ENCODE measurements at regions of chr11 and their contacts with region 1.

Region 1: DNA sequence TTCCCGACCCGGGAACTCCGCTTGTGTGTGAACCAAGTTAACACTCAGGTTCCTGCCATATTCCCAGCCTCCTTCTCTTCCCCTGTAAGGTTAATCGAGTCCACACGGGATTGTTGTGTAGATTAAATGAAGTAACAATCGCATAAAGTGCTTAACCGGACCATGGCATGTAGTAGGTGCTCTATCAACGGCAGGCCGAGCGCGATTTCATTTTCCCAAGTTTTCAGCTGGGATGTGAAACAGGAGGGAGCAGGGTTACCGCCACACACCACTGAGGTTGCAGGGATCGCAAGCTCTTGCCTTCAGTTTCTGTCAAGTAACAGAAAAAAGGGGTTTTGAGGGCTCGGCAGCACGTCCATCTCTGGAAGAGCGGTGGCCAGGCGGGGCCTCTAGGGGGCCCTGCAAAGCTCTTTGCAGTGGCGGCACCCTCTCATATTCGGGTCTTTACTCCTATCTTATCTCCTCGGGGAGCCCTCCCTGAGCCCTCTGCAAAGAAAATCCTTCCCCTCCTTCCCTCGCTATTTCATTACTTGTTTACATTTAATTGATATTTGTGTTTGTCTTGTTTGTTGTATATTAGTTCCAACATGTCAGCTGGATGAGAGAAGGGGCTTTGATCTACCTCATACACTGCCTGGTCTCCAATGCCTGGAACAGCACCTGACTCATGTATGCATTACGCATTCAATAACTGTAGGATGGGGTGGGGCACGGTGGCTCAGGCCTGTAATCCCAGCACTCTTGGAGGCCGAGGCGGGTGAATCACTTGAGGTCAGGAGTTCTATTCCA is 818 bp upstream of the PLEKHA7 start:
- DNase-seq: peak; percentile 62 to 65
- H3K4me3 ChIP-seq: peak overlapping the region; percentile 56
- H3K4me3 Mint-ChIP-seq: no peak overlapping the region
- H3K27ac Mint-ChIP-seq: peak overlapping the region; percentile 66
- H3K4me1 ChIP-seq: peaks cover 23% of the 10 kb centered on the region
- H3K4me1 Mint-ChIP-seq: peaks cover 8% of the 10 kb centered on the region
- H3K27me3 ChIP-seq: no peaks in the 10 kb centered on the region
- H3K27me3 Mint-ChIP-seq: no peaks in the 10 kb centered on the region
- CTCF ChIP-seq: peak; percentile 73 to 86

Region 2: DNA sequence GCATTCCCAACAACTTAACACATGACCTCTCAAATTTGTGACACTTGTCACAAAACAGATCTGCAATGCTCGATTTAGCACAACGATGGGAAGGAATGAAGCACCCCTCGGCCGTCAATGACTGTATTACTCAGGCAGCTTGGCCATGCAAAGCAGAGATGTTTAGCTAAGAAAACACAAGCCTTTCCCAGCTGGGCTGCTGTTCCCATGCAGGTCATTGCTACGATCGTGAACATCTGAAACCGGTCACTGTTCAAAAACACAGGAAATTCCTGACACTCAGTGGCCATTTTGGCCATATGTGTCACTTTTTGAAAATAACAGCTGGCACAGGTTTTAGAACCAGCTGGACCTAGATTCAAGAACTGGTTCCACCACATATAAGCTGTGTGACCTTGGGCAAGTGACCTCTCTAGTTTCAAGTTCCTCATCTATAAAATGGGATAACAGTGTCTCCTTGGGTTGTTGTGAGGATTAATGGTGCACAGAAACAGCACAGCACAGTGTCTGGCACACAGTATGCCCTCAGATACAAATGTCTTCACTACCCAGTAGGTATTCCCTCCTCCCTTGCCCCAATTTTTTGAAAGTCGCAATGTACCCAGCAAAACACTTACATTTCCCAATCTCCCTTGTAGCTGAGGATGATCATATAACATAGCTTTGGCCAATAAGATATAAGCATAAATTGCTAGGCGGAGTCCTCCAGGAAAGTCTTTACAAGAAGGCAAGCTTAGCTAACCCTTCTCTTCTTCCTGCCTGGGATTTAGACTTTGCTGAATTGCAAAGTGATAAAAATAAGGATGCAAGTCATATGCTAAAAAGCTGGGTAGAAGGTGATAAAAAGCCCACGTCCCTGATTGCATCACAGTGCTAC is 183.5 kb before region 1 on chr11:
- CTCF ChIA-PET with region 1: no interaction called
- POLR2A ChIA-PET with region 1: no interaction called
- intact Hi-C with region 1: no loop called
- DNase-seq: no peak
- H3K4me3 ChIP-seq: no peak overlapping the region
- H3K4me3 Mint-ChIP-seq: no peak overlapping the region
- H3K27ac Mint-ChIP-seq: peak overlapping the region; percentile 12
- H3K4me1 ChIP-seq: no peaks in the 10 kb centered on the region; the same call in 1 of the 2 replicates
- H3K4me1 Mint-ChIP-seq: no peaks in the 10 kb centered on the region
- H3K27me3 ChIP-seq: no peaks in the 10 kb centered on the region
- H3K27me3 Mint-ChIP-seq: no peaks in the 10 kb centered on the region
- CTCF ChIP-seq: no peak

Region 3: GRCh38 chr11:16891964-16892363 is 123.1 kb before region 1 on chr11:
- CTCF ChIA-PET with region 1: no interaction called
- POLR2A ChIA-PET with region 1: no interaction called
- intact Hi-C with region 1: no loop called
- DNase-seq: no peak
- H3K4me3 ChIP-seq: no peak overlapping the region
- H3K4me3 Mint-ChIP-seq: no peak overlapping the region
- H3K27ac Mint-ChIP-seq: peak overlapping the region; percentile 70
- H3K4me1 ChIP-seq: peaks cover 56% of the 10 kb centered on the region
- H3K4me1 Mint-ChIP-seq: peaks cover 57% of the 10 kb centered on the region
- H3K27me3 ChIP-seq: no peaks in the 10 kb centered on the region; the same call in 1 of the 2 replicates
- H3K27me3 Mint-ChIP-seq: no peaks in the 10 kb centered on the region
- CTCF ChIP-seq: no peak

Region 4: GRCh38 chr11:16945671-16946469 is 69.2 kb before region 1 on chr11:
- CTCF ChIA-PET with region 1: interaction called, 13 read pairs
- POLR2A ChIA-PET with region 1: interaction called, 4 read pairs
- intact Hi-C with region 1: loop called (anchors 1 kb)
- DNase-seq: peak; percentile 75 to 83
- H3K4me3 ChIP-seq: no peak overlapping the region
- H3K4me3 Mint-ChIP-seq: no peak overlapping the region
- H3K27ac Mint-ChIP-seq: peak overlapping the region; percentile 3
- H3K4me1 ChIP-seq: peaks cover 9% of the 10 kb centered on the region; the same call in 1 of the 2 replicates
- H3K4me1 Mint-ChIP-seq: peaks cover 16% of the 10 kb centered on the region
- H3K27me3 ChIP-seq: no peaks in the 10 kb centered on the region
- H3K27me3 Mint-ChIP-seq: no peaks in the 10 kb centered on the region
- CTCF ChIP-seq: peak; percentile 87 to 97

Region 5: GRCh38 chr11:16956538-16957153 is 58.4 kb before region 1 on chr11:
- CTCF ChIA-PET with region 1: no interaction called
- POLR2A ChIA-PET with region 1: no interaction called
- intact Hi-C with region 1: loop called (anchors 2 kb)
- DNase-seq: peak; percentile 68 to 70
- H3K4me3 ChIP-seq: no peak overlapping the region
- H3K4me3 Mint-ChIP-seq: peak overlapping the region; percentile 61
- H3K27ac Mint-ChIP-seq: peak overlapping the region; percentile 76
- H3K4me1 ChIP-seq: peaks cover 68% of the 10 kb centered on the region
- H3K4me1 Mint-ChIP-seq: peaks cover 48% of the 10 kb centered on the region
- H3K27me3 ChIP-seq: no peaks in the 10 kb centered on the region
- H3K27me3 Mint-ChIP-seq: no peaks in the 10 kb centered on the region
- CTCF ChIP-seq: no peak

Region 6: DNA sequence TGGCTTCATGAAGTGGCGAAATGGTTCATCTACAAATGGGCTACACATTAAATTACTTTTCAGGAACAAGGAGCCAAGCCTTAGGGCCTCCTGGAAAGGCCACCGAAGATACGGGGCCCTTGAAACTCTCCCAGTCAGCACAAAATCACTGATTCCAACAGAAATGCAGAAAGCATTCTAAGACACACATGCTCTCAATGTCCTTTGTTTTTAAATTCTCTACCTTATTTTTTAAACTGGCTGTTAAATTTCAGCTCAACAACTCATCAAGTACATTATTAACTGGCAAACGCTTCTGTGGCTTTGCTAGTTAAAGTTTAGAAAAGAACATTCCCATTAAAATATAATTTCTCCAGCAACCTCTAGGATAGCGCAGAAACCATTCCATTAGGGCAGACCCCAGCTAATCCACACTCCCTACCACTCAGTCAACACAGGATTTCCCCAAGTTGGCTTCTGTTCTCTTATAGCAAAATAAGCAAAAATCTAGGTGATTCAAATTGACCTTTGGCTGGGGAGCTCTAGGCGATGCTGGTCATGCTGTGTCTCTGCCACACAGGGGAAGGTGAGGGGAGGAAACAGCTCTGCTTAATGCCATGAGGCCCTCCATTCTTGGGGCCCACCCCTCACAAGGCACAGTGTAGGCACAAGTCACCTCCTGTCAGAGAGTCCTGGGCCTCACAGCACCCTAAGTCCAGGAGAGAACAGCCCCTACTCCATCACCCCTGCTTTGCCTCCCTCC is 47.9 kb before region 1 on chr11:
- CTCF ChIA-PET with region 1: no interaction called
- POLR2A ChIA-PET with region 1: no interaction called
- intact Hi-C with region 1: loop called (anchors 1 kb)
- DNase-seq: no peak
- H3K4me3 ChIP-seq: no peak overlapping the region
- H3K4me3 Mint-ChIP-seq: no peak overlapping the region
- H3K27ac Mint-ChIP-seq: peak overlapping the region; percentile 36
- H3K4me1 ChIP-seq: peaks cover 21% of the 10 kb centered on the region
- H3K4me1 Mint-ChIP-seq: peaks cover 32% of the 10 kb centered on the region
- H3K27me3 ChIP-seq: no peaks in the 10 kb centered on the region
- H3K27me3 Mint-ChIP-seq: no peaks in the 10 kb centered on the region
- CTCF ChIP-seq: no peak

Region 7: GRCh38 chr11:16981651-16982194 is 33.3 kb before region 1 on chr11:
- CTCF ChIA-PET with region 1: no interaction called
- POLR2A ChIA-PET with region 1: no interaction called
- intact Hi-C with region 1: no loop called
- DNase-seq: no peak
- H3K4me3 ChIP-seq: no peak overlapping the region
- H3K4me3 Mint-ChIP-seq: no peak overlapping the region
- H3K27ac Mint-ChIP-seq: no peak overlapping the region
- H3K4me1 ChIP-seq: peaks cover 9% of the 10 kb centered on the region
- H3K4me1 Mint-ChIP-seq: peaks cover 24% of the 10 kb centered on the region
- H3K27me3 ChIP-seq: no peaks in the 10 kb centered on the region
- H3K27me3 Mint-ChIP-seq: no peaks in the 10 kb centered on the region
- CTCF ChIP-seq: no peak

Region 8: DNA sequence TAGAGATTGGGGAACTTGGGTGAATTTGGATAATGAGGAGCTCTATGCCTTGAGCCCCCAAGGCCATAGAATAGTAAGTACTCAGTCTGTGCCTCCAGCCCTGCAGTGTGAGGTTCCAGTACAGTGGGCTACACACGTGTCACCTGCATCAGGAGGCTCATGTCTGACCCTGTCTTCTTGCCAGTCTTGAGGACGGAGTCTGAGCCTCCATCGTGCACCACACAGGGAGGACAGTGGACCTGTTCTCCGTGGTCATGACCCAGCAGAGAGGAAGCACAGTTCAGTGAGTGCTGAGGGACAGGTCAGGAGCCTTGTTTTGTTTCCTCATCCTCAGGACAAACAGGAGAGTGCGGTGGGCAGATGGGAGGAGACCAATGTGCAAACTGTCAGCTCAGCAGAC is 31.7 kb after region 1 on chr11:
- CTCF ChIA-PET with region 1: interaction called, 4 read pairs
- POLR2A ChIA-PET with region 1: no interaction called
- intact Hi-C with region 1: loop called (anchors 1 kb)
- DNase-seq: no peak
- H3K4me3 ChIP-seq: no peak overlapping the region
- H3K4me3 Mint-ChIP-seq: no peak overlapping the region
- H3K27ac Mint-ChIP-seq: peak overlapping the region; percentile 59
- H3K4me1 ChIP-seq: peaks cover 35% of the 10 kb centered on the region
- H3K4me1 Mint-ChIP-seq: peaks cover 30% of the 10 kb centered on the region
- H3K27me3 ChIP-seq: no peaks in the 10 kb centered on the region
- H3K27me3 Mint-ChIP-seq: no peaks in the 10 kb centered on the region
- CTCF ChIP-seq: no peak

Measured in Caco-2 (cell line).